Caco-2 (cell line): ENCODE measurements at regions of chr15 and their contacts with region 1.

Region 1: GRCh38 chr15:55799291-55800212 is 56.6 kb upstream of the PRTG start:
- DNase-seq: peak; percentile 68 to 76
- H3K4me3 ChIP-seq: no peak overlapping the region
- H3K4me3 Mint-ChIP-seq: no peak overlapping the region
- H3K27ac Mint-ChIP-seq: peak overlapping the region; percentile 40
- H3K4me1 ChIP-seq: no peaks in the 10 kb centered on the region
- H3K4me1 Mint-ChIP-seq: no peaks in the 10 kb centered on the region
- H3K27me3 ChIP-seq: no peaks in the 10 kb centered on the region
- H3K27me3 Mint-ChIP-seq: no peaks in the 10 kb centered on the region
- CTCF ChIP-seq: peak; percentile 67 to 73

Region 2: GRCh38 chr15:55661428-55661827 is 138.1 kb before region 1 on chr15:
- CTCF ChIA-PET with region 1: no interaction called
- POLR2A ChIA-PET with region 1: no interaction called
- intact Hi-C with region 1: loop called (anchors 5 kb)
- DNase-seq: peak in 1 of 2 experiments; percentile 59
- H3K4me3 ChIP-seq: no peak overlapping the region
- H3K4me3 Mint-ChIP-seq: peak overlapping the region; percentile 21
- H3K27ac Mint-ChIP-seq: peak overlapping the region; percentile 64
- H3K4me1 ChIP-seq: peaks cover 32% of the 10 kb centered on the region
- H3K4me1 Mint-ChIP-seq: peaks cover 19% of the 10 kb centered on the region
- H3K27me3 ChIP-seq: no peaks in the 10 kb centered on the region
- H3K27me3 Mint-ChIP-seq: no peaks in the 10 kb centered on the region
- CTCF ChIP-seq: no peak

Region 3: DNA sequence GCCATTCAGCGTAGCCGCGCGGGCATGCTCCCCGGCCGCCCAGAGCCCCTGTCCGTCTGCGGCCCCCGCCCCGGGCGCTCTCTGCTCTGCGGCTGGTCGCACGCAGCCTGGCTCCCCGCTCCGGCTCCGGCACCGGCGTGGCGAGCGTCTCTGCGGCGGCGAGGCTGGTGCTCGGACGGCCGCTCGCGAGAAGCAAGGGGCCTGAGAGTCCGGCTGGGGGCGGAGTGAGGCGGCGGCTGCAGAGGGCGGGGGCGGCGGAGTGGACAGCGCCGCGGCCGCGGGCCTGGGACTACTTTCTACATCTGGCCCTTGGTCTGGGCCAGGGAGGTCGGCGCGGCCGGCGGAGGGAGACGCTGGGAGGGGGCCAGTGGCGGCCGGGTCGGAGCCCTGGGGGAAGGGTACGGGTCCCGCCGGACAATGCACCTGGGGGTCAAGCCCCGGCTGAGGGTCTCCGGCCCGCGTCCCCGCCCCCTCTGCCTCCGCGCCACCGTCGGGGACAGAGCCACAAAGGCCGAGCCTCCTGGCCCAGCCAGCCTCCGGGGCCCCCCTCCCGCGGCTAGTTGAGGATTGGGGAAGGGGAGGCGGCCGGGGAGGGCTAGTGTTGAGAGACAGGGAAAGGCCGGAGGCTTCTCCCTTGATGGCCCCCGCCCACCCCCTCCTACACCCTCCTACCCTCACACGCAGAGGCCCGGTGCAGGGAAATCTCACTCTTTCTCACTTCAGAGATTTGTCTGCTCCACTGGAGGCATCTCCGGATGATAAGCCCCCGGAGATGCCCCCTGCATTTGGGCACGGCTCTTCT is 56.4 kb before region 1 on chr15 and contains the start of gene PRTG:
- CTCF ChIA-PET with region 1: no interaction called
- POLR2A ChIA-PET with region 1: no interaction called
- intact Hi-C with region 1: loop called (anchors 5 kb)
- DNase-seq: peak; percentile 91 to 92
- H3K4me3 ChIP-seq: peak within 1 kb of the TSS; percentile 90
- H3K4me3 Mint-ChIP-seq: no peak within 1 kb of the TSS
- H3K27ac Mint-ChIP-seq: peak within 1 kb of the TSS; percentile 20
- H3K4me1 ChIP-seq: peaks cover 42% of the 10 kb centered on the region
- H3K4me1 Mint-ChIP-seq: peaks cover 7% of the 10 kb centered on the region
- H3K27me3 ChIP-seq: no peaks in the 10 kb centered on the region
- H3K27me3 Mint-ChIP-seq: no peaks in the 10 kb centered on the region
- CTCF ChIP-seq: no peak
- total RNA-seq, gene PRTG: 39.1 and 40.2 TPM in 2 replicates